CD8-positive, alpha-beta T cell (primary cell): ENCODE measurements at regions of chr19 and their contacts with region 1.

Region 1: DNA sequence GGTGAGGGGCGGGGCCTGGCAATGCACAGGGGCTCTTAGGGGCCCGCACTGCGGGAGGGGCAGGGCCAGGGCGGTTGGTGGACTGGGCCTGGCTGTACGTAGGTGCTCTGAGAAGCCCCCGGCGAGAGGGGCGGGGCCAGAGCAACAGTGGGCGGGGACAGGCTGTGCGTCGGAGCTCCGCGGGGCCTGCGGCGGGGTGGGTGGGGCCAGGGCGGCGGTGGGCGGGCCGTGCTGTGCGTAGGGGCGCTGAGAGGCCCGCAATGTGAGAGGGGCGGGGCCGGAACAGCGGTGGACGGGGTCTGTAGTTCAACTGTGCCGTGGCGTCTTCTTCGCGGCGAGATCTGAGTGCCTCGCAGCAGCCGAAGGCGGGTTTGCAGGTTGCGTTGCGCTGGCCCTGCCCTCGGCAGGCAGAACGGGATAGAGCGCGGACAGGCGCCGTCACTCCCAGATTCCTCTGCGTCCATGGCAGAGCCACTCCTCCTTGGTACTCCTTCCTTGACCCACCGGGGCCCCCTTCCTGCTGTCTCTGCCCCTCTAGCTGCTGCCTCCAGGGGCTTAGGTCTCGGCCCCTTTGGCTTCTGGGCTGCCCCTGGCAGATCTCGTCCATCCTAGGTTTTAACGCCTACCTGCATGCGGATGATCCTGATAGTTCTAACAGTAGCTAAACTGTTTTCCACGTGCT is 33.2 kb downstream of the CCNE1 start:
- DNase-seq: peak; percentile 92 to 99 (median 97)
- ATAC-seq: peak; percentile 79
- H3K4me3 ChIP-seq: peak overlapping the region; percentile 93 to 95
- H3K4me3 Mint-ChIP-seq: peak overlapping the region; percentile 96
- H3K27ac ChIP-seq: peak overlapping the region; percentile 74 to 80
- H3K27ac Mint-ChIP-seq: peak overlapping the region; percentile 97
- H3K4me1 ChIP-seq: peaks cover 12% of the 10 kb centered on the region
- H3K4me1 Mint-ChIP-seq: peaks cover 14% of the 10 kb centered on the region
- H3K27me3 ChIP-seq: peaks cover 0 to 7% of the 10 kb centered on the region in 2 experiments
- H3K27me3 Mint-ChIP-seq: no peaks in the 10 kb centered on the region
- CTCF ChIP-seq: no peak

Region 2: DNA sequence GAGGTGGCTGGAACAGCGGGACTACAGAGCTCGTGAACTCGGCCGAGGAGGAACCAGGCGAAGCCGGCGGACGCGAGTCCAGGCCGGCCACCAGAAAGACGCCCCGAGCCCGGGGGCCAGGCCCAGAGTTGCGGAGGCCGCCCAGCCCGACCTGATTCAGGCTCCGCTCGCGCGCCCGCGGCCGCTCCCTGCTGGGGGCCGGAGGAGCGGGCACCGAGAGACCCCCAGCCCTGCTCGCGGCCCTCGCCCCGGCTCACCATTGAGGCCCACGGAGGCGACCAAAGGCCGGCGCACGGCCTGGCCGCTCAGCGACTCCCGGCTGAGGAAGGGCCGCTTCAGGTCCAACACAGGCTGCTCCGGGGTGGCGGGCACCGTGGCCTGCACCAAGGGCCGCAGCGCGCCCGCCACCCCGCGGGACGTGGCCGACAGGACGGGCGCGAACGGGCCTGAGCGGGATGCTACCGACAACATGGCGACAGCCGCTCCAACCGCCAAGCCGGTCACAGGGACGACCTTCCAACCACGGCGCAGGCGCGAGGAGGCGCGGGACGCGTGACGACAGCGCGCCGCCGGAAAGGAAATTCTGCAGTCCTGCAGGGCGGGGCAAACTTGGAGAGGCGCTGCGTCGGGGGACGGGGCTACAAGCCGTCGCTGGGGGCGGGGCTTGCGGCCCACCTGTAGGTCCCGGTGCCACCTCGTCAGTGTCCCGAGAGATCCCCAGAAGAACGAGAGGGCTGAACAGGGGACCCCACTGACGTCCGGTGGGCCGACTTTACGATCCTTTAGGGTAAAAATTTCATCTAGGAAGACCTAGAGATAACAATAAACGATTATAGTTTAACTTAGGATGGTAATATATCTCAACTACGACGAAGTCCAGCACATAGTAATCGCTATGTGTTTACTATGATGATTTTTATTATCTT is 632.1 kb before region 1 on chr19 and contains the start of gene UQCRFS1:
- CTCF ChIA-PET with region 1: no interaction called
- POLR2A ChIA-PET with region 1: interaction called, 3 read pairs
- intact Hi-C with region 1: loop called in 1 of 2 experiments (anchors 10 kb)
- DNase-seq: peak; percentile 92 to 97 (median 95)
- ATAC-seq: peak; percentile 97
- H3K4me3 ChIP-seq: peak within 1 kb of the TSS; percentile 60 to 77
- H3K4me3 Mint-ChIP-seq: peak within 1 kb of the TSS; percentile 95
- H3K27ac ChIP-seq: peak within 1 kb of the TSS; percentile 80 to 89
- H3K27ac Mint-ChIP-seq: peak within 1 kb of the TSS; percentile 96
- H3K4me1 ChIP-seq: peaks cover 17% of the 10 kb centered on the region
- H3K4me1 Mint-ChIP-seq: peaks cover 46% of the 10 kb centered on the region
- H3K27me3 ChIP-seq: no peaks in the 10 kb centered on the region
- H3K27me3 Mint-ChIP-seq: peaks cover 6% of the 10 kb centered on the region
- CTCF ChIP-seq: no peak
- total RNA-seq, gene UQCRFS1: 31.5 to 31.8 TPM

Region 3: DNA sequence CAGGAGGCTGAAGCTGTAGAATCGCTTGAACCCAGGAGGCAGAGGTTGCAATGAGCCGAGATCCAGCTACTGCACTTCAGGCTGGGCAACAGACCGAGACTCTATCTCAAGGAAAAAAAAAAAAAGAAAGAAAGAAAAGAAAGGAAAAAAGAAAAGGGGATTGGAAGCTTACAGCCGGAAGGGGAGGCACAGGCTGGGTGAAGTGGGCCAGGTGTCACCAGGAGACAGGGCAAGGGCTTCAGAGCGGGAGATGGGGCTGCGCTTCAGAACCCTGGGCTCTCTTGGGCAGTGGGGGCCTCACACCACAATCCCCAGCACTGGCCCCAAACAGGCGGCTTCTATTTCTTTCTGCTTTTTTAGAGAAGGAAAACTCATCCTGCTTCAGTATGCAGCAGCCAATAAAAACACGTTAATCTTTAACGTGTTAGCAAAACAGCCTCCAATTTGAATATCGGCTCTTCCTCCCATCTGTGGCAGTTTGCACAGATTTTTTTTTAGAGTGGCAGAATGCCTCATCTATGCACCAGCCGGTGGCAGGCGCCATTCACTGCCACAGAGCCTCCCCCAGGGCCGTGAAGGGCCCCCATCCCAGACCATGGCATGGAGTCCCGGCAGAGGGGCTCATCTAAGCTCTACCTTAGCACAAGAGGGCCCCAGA is 83.3 kb before region 1 on chr19:
- CTCF ChIA-PET with region 1: interaction called, 9 read pairs
- POLR2A ChIA-PET with region 1: no interaction called
- intact Hi-C with region 1: loop called in 1 of 2 experiments (anchors 1 kb)
- DNase-seq: no peak
- ATAC-seq: no peak
- H3K4me3 ChIP-seq: no peak overlapping the region
- H3K4me3 Mint-ChIP-seq: no peak overlapping the region
- H3K27ac ChIP-seq: no peak overlapping the region
- H3K27ac Mint-ChIP-seq: no peak overlapping the region
- H3K4me1 ChIP-seq: no peaks in the 10 kb centered on the region
- H3K4me1 Mint-ChIP-seq: peaks cover 2% of the 10 kb centered on the region
- H3K27me3 ChIP-seq: no peaks in the 10 kb centered on the region
- H3K27me3 Mint-ChIP-seq: peaks cover 1% of the 10 kb centered on the region
- CTCF ChIP-seq: no peak

Region 4: GRCh38 chr19:29831041-29831548 is 13.9 kb before region 1 on chr19:
- CTCF ChIA-PET with region 1: interaction called, 5 read pairs
- POLR2A ChIA-PET with region 1: interaction called, 38 read pairs
- intact Hi-C with region 1: loop called (anchors 1 kb)
- DNase-seq: peak in 8 of 9 experiments; percentile 51 to 89 (median 72)
- ATAC-seq: peak; percentile 98
- H3K4me3 ChIP-seq: peak overlapping the region; percentile 10 to 17
- H3K4me3 Mint-ChIP-seq: peak overlapping the region; percentile 82
- H3K27ac ChIP-seq: peak overlapping the region; percentile 49 to 66
- H3K27ac Mint-ChIP-seq: peak overlapping the region; percentile 98
- H3K4me1 ChIP-seq: peaks cover 32% of the 10 kb centered on the region
- H3K4me1 Mint-ChIP-seq: peaks cover 45% of the 10 kb centered on the region
- H3K27me3 ChIP-seq: no peaks in the 10 kb centered on the region
- H3K27me3 Mint-ChIP-seq: no peaks in the 10 kb centered on the region
- CTCF ChIP-seq: no peak

Region 5: GRCh38 chr19:29873024-29873800 is 28.2 kb after region 1 on chr19:
- CTCF ChIA-PET with region 1: interaction called, 5 read pairs
- POLR2A ChIA-PET with region 1: interaction called, 4 read pairs
- intact Hi-C with region 1: loop called in 1 of 2 experiments (anchors 1 kb)
- DNase-seq: peak; percentile 39 to 84 (median 67)
- ATAC-seq: peak; percentile 78
- H3K4me3 ChIP-seq: peak overlapping the region; percentile 18 to 63
- H3K4me3 Mint-ChIP-seq: peak overlapping the region; percentile 78
- H3K27ac ChIP-seq: no peak overlapping the region
- H3K27ac Mint-ChIP-seq: no peak overlapping the region
- H3K4me1 ChIP-seq: peaks cover 4% of the 10 kb centered on the region
- H3K4me1 Mint-ChIP-seq: peaks cover 8% of the 10 kb centered on the region
- H3K27me3 ChIP-seq: peaks cover 0 to 9% of the 10 kb centered on the region in 2 experiments
- H3K27me3 Mint-ChIP-seq: peaks cover 23% of the 10 kb centered on the region
- CTCF ChIP-seq: peak; percentile 94